ENCODE measurements at regions of chr18 and their contacts with region 1.

Region 1: DNA sequence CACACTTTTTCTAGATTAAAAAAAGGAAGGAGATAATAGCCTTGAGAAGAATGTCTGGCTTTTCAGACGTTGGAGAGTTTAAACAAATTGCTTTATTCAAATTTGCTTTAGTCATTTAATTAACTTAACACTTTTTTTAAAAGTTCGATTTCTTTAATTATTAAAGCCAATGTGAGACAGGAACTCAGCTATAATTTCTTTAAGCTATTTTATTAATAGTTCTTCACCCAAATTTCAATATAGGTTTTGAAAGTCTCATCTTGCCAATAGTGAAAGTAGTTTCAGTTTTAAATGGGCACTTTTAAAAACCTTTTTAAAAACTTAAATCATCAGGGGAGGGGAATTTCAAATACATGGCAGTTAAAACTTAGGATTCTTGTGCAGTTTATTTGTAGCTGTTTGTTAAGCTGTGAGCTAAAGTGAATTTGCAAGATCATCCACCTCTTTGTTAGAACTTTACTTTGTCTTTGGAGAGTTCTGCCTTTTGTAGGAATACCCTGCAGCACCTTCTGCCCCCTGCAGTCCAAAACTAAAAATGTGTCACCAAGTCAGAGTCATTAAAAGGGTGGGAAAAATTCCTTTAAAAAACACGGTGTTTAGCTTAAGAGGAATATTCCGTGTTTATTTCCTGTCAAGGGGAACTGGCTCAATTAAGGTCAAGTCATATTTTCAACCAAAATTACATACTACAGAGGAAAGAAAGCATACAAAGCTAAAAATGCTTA is 4.6 kb downstream of the TGIF1 start:
- DNase-seq: peak; percentile 53 to 61 (median 57)
- H3K4me3 ChIP-seq: peak overlapping the region; percentile 40 to 52
- H3K4me3 Mint-ChIP-seq: peak overlapping the region; percentile 80 to 97 (median 95)
- H3K27ac ChIP-seq: peak overlapping the region; percentile 94
- H3K27ac Mint-ChIP-seq: peak overlapping the region; percentile 87 to 100 (median 98)
- H3K4me1 ChIP-seq: peaks cover 70% of the 10 kb centered on the region
- H3K4me1 Mint-ChIP-seq: peaks cover 43 to 84% (median 59%) of the 10 kb centered on the region in 4 donors
- H3K27me3 ChIP-seq: no peaks in the 10 kb centered on the region
- H3K27me3 Mint-ChIP-seq: peaks cover 0 to 2% of the 10 kb centered on the region in 2 donors

Region 2: DNA sequence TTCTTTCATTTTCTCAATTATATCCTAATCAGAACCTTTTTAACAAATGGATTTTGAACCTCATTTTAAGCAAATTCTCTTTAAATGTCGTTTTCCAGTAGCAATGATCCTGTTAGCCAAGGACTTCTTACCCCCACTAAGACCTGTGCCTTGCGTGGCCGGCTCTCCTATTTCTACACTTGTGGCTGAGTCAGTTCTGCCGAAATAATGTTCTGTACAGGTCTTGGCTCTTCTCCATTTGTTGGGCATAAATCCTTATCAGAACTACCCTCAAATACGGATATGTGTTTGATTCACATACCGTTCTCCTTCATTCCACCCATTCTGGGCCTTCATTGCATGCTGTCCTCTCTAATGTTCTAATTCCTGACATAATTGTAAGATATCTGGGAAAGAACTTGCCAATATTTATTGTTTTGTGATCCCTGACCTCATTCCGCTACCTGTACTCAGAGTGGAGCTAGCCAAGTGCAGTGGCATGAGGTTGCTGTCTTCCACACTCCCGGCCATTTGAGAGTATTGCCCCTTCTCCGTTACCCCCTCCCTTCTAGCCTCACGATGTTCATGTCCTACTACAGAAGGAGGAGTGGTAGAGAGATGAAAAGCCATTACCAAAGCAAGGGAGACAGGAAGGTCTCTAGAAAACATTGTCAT is 313.4 kb before region 1 on chr18:
- CTCF ChIA-PET with region 1: no interaction called
- POLR2A ChIA-PET with region 1: no interaction called
- intact Hi-C with region 1: no loop called
- DNase-seq: no peak
- H3K4me3 ChIP-seq: no peak overlapping the region
- H3K4me3 Mint-ChIP-seq: no peak overlapping the region
- H3K27ac ChIP-seq: no peak overlapping the region
- H3K27ac Mint-ChIP-seq: peak overlapping the region in 1 of 7 donors; percentile 45
- H3K4me1 ChIP-seq: no peaks in the 10 kb centered on the region
- H3K4me1 Mint-ChIP-seq: no peaks in the 10 kb centered on the region
- H3K27me3 ChIP-seq: no peaks in the 10 kb centered on the region
- H3K27me3 Mint-ChIP-seq: peaks cover 0 to 1% of the 10 kb centered on the region in 2 donors

Region 3: DNA sequence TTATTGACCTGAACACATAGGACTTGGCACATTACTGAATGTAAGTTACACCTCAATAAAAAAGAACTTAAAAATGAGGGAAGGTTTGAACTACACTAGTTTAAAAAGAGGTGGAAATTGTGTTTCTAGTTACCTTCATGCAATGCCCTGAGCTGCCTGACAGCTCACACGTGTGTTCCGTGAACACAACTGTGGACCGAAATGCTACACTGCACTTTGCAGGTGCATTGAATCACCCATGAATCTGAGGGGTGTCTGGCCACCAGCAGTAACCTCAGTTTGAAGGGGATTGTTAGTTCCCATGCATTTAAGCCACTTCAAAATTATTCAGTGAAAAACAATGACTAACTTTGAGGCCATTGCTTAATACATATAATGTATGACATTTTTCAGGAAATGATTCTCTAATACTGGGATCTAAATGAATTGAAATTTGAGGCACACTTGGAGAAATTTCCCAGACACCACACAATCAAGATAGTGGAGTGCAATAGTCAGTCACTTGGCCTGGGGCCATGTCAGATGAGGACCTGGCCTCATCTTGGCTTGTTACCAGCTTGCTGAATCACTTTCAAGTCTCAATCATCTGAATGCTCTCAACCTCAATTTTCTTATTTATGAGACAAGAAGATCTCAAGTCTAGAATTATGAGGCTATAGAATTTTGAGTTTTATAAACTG is 133.3 kb before region 1 on chr18:
- CTCF ChIA-PET with region 1: interaction called, 12 read pairs
- POLR2A ChIA-PET with region 1: no interaction called
- intact Hi-C with region 1: no loop called
- DNase-seq: no peak
- H3K4me3 ChIP-seq: no peak overlapping the region
- H3K4me3 Mint-ChIP-seq: no peak overlapping the region
- H3K27ac ChIP-seq: no peak overlapping the region
- H3K27ac Mint-ChIP-seq: peak overlapping the region in 1 of 7 donors; percentile 7
- H3K4me1 ChIP-seq: no peaks in the 10 kb centered on the region
- H3K4me1 Mint-ChIP-seq: peaks cover 0 to 2% (median 0%) of the 10 kb centered on the region in 4 donors
- H3K27me3 ChIP-seq: no peaks in the 10 kb centered on the region
- H3K27me3 Mint-ChIP-seq: peaks cover 6% of the 10 kb centered on the region in 2 donors

Region 4: GRCh38 chr18:3466045-3466444 is 11.5 kb after region 1 on chr18:
- CTCF ChIA-PET with region 1: interaction called, 68 read pairs
- POLR2A ChIA-PET with region 1: interaction called, 139 read pairs
- intact Hi-C with region 1: no loop called
- DNase-seq: no peak
- H3K4me3 ChIP-seq: no peak overlapping the region
- H3K4me3 Mint-ChIP-seq: peak overlapping the region in 1 of 8 donors; percentile 69
- H3K27ac ChIP-seq: no peak overlapping the region
- H3K27ac Mint-ChIP-seq: peak overlapping the region in 3 of 7 donors; percentile 24 to 68 (median 41)
- H3K4me1 ChIP-seq: peaks cover 17% of the 10 kb centered on the region
- H3K4me1 Mint-ChIP-seq: peaks cover 12 to 22% (median 17%) of the 10 kb centered on the region in 4 donors
- H3K27me3 ChIP-seq: no peaks in the 10 kb centered on the region
- H3K27me3 Mint-ChIP-seq: no peaks in the 10 kb centered on the region

Region 5: GRCh38 chr18:3525870-3526420 is 71.4 kb after region 1 on chr18:
- CTCF ChIA-PET with region 1: interaction called, 10 read pairs
- POLR2A ChIA-PET with region 1: interaction called, 11 read pairs
- intact Hi-C with region 1: loop called (anchors 5 kb)
- DNase-seq: peak; percentile 67 to 75 (median 71)
- H3K4me3 ChIP-seq: peak overlapping the region in 1 of 2 donors; percentile 47
- H3K4me3 Mint-ChIP-seq: peak overlapping the region; percentile 72 to 89 (median 82)
- H3K27ac ChIP-seq: no peak overlapping the region
- H3K27ac Mint-ChIP-seq: peak overlapping the region; percentile 25 to 86 (median 77)
- H3K4me1 ChIP-seq: peaks cover 16% of the 10 kb centered on the region
- H3K4me1 Mint-ChIP-seq: peaks cover 12 to 20% (median 15%) of the 10 kb centered on the region in 4 donors
- H3K27me3 ChIP-seq: no peaks in the 10 kb centered on the region
- H3K27me3 Mint-ChIP-seq: no peaks in the 10 kb centered on the region

Region 6: DNA sequence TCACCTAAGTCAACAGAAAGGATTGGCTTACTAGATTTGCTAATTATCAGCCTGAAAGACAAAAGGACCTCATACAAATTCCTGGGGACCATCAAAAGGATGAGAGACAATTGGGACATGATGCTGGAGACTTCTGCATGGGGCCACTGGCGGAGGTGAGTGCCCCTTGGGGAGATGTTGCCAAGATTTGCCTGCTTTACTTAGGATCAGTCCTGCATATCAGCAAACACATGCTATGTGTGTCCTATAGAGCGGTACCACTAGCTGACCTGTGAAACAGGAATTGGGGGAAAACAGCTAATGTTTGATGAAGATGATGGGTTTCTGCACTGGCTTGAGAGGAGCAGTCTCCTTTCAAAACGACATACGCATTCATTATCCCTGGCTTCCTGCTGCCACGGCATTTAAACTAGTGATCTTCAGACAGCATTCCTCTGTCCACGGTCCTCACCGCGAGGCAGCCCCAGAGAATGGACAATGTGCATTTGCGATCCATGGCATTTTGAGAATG is 99.6 kb after region 1 on chr18:
- CTCF ChIA-PET with region 1: no interaction called
- POLR2A ChIA-PET with region 1: no interaction called
- intact Hi-C with region 1: no loop called
- DNase-seq: no peak
- H3K4me3 ChIP-seq: no peak overlapping the region
- H3K4me3 Mint-ChIP-seq: no peak overlapping the region
- H3K27ac ChIP-seq: no peak overlapping the region
- H3K27ac Mint-ChIP-seq: no peak overlapping the region
- H3K4me1 ChIP-seq: no peaks in the 10 kb centered on the region
- H3K4me1 Mint-ChIP-seq: no peaks in the 10 kb centered on the region
- H3K27me3 ChIP-seq: no peaks in the 10 kb centered on the region
- H3K27me3 Mint-ChIP-seq: no peaks in the 10 kb centered on the region

Region 7: GRCh38 chr18:3604498-3605408 is 150.2 kb after region 1 on chr18:
- CTCF ChIA-PET with region 1: interaction called, 16 read pairs
- POLR2A ChIA-PET with region 1: interaction called, 32 read pairs
- intact Hi-C with region 1: no loop called
- DNase-seq: peak; percentile 43 to 63 (median 56)
- H3K4me3 ChIP-seq: peak overlapping the region; percentile 44 to 54
- H3K4me3 Mint-ChIP-seq: no peak overlapping the region
- H3K27ac ChIP-seq: peak overlapping the region; percentile 67
- H3K27ac Mint-ChIP-seq: no peak overlapping the region
- H3K4me1 ChIP-seq: peaks cover 58% of the 10 kb centered on the region
- H3K4me1 Mint-ChIP-seq: peaks cover 8 to 15% (median 11%) of the 10 kb centered on the region in 4 donors
- H3K27me3 ChIP-seq: no peaks in the 10 kb centered on the region
- H3K27me3 Mint-ChIP-seq: no peaks in the 10 kb centered on the region

Region 8: GRCh38 chr18:3790703-3791102 is 336.2 kb after region 1 on chr18:
- CTCF ChIA-PET with region 1: no interaction called
- POLR2A ChIA-PET with region 1: no interaction called
- intact Hi-C with region 1: no loop called
- DNase-seq: no peak
- H3K4me3 ChIP-seq: no peak overlapping the region
- H3K4me3 Mint-ChIP-seq: no peak overlapping the region
- H3K27ac ChIP-seq: no peak overlapping the region
- H3K27ac Mint-ChIP-seq: no peak overlapping the region
- H3K4me1 ChIP-seq: no peaks in the 10 kb centered on the region
- H3K4me1 Mint-ChIP-seq: no peaks in the 10 kb centered on the region
- H3K27me3 ChIP-seq: no peaks in the 10 kb centered on the region
- H3K27me3 Mint-ChIP-seq: peaks cover 8 to 12% of the 10 kb centered on the region in 2 donors